ENCODE measurements at regions of chr17 and their contacts with region 1.

Region 1: DNA sequence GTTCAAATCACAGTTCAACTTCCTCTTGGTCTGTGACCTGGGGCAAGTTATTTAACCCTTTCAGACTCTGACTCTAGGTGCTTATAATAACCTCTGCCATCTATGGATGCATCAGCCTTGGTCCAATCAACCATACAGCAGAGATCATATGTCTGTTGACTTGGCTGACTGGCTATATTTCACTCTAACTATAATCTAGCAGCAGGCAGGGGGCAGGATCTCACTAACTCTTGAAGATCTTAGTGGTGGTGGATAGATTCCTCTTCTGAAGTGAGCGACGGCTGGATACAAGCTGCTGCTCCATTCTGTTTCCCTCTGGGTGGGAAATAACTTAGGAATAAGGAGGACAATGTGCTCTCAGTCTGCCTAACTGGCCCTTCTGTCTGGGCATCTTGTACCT is 146.6 kb downstream of the SKAP1 start:
- DNase-seq: no peak
- ATAC-seq: no peak
- H3K4me3 Mint-ChIP-seq: no peak overlapping the region
- H3K27ac Mint-ChIP-seq: no peak overlapping the region
- H3K4me1 Mint-ChIP-seq: peaks cover 12% of the 10 kb centered on the region
- H3K27me3 Mint-ChIP-seq: no peaks in the 10 kb centered on the region

Region 2: GRCh38 chr17:47956661-47957590 is 326.5 kb before region 1 on chr17:
- CTCF ChIA-PET with region 1: no interaction called
- POLR2A ChIA-PET with region 1: no interaction called
- intact Hi-C with region 1: loop called in 1 of 2 experiments (anchors 5 kb)
- DNase-seq: no peak
- ATAC-seq: no peak
- H3K4me3 Mint-ChIP-seq: no peak overlapping the region
- H3K27ac Mint-ChIP-seq: no peak overlapping the region
- H3K4me1 Mint-ChIP-seq: no peaks in the 10 kb centered on the region
- H3K27me3 Mint-ChIP-seq: no peaks in the 10 kb centered on the region